Sciatic nerve (tissue), 2 donors: ENCODE measurements at regions of chr11 and their contacts with region 1.

Region 1: GRCh38 chr11:31903225-31904074 is 92.3 kb upstream of the PAX6 start:
- DNase-seq: no peak
- ATAC-seq: peak; percentile 78

Region 2: GRCh38 chr11:31421820-31422219 is 481.6 kb before region 1 on chr11:
- intact Hi-C with region 1: no loop called
- DNase-seq: no peak
- ATAC-seq: no peak

Region 3: GRCh38 chr11:31870609-31871309 is 32.7 kb before region 1 on chr11:
- intact Hi-C with region 1: loop called (anchors 1 kb)
- DNase-seq: peak; percentile 61
- ATAC-seq: no peak